Head of caudate nucleus (tissue), 42 donors: ENCODE measurements at regions of chr21 and their contacts with region 1.

Region 1: DNA sequence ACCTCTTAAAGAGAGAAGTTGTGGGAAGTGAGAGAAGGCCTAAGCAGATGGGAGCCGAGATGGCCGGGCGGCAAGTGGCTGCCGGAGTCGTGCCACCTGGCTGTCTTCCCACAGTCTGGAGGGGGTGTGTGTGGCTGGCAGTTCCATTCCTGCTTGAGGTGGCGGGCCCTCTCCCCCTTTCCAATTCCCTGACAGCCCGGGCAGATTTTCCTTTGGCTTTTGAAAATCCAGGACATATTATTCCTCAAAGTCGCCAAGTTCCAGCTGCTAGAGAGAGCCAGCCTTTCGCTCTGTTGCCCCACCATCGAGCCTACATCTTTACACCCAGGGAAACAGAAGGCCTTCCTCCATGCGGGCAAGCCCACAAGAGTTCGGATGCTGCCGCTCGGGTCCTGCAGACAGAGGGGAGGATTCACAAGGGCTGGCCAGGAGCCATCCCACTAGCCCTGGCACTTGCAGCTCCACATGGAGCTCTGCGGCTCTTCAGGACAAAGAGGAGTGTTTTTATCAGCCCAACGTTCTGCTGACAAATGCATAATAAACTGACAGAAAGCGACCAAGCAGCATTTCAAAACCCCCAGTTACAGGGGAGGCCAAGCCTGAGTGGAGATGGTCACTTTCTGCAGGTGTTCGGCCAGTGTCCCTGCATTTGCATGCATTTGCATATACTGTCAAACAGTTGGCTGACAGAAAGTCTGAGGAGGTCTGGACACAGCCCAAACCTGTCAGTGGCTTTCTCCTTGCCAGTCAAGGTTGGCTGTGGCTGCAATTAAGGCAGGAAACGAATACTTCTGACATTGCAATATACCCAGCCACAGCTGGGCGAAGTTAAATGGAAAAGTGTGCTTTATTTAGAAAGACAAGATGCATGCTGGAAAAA is 45.9 kb downstream of the OLIG1 start:
- DNase-seq: peak; percentile 73 to 94 (median 87)

Region 2: GRCh38 chr21:33078907-33079582 is 36.8 kb before region 1 on chr21:
- intact Hi-C with region 1: loop called (anchors 2 kb)
- DNase-seq: peak; percentile 68 to 96 (median 89)